ENCODE measurements at regions of chr22 and their contacts with region 1.

Region 1: GRCh38 chr22:43587565-43587964 is 175.8 kb downstream of the MPPED1 start:
- DNase-seq: peak; percentile 28
- ATAC-seq: no peak
- H3K4me3 ChIP-seq: no peak overlapping the region
- H3K27ac ChIP-seq: no peak overlapping the region
- H3K4me1 ChIP-seq: no peaks in the 10 kb centered on the region
- H3K27me3 ChIP-seq: no peaks in the 10 kb centered on the region
- CTCF ChIP-seq: no peak

Region 2: GRCh38 chr22:43515902-43516301 is 71.7 kb before region 1 on chr22:
- CTCF ChIA-PET with region 1: no interaction called
- POLR2A ChIA-PET with region 1: no interaction called
- intact Hi-C with region 1: no loop called
- DNase-seq: no peak
- ATAC-seq: no peak
- H3K4me3 ChIP-seq: no peak overlapping the region
- H3K27ac ChIP-seq: no peak overlapping the region
- H3K4me1 ChIP-seq: peaks cover 6% of the 10 kb centered on the region
- H3K27me3 ChIP-seq: no peaks in the 10 kb centered on the region
- CTCF ChIP-seq: no peak

Region 3: GRCh38 chr22:43726322-43726721 is 138.8 kb after region 1 on chr22:
- CTCF ChIA-PET with region 1: interaction called, 17 read pairs
- POLR2A ChIA-PET with region 1: no interaction called
- intact Hi-C with region 1: no loop called
- DNase-seq: no peak
- ATAC-seq: no peak
- H3K4me3 ChIP-seq: no peak overlapping the region
- H3K27ac ChIP-seq: no peak overlapping the region
- H3K4me1 ChIP-seq: no peaks in the 10 kb centered on the region
- H3K27me3 ChIP-seq: no peaks in the 10 kb centered on the region
- CTCF ChIP-seq: no peak

Region 4: DNA sequence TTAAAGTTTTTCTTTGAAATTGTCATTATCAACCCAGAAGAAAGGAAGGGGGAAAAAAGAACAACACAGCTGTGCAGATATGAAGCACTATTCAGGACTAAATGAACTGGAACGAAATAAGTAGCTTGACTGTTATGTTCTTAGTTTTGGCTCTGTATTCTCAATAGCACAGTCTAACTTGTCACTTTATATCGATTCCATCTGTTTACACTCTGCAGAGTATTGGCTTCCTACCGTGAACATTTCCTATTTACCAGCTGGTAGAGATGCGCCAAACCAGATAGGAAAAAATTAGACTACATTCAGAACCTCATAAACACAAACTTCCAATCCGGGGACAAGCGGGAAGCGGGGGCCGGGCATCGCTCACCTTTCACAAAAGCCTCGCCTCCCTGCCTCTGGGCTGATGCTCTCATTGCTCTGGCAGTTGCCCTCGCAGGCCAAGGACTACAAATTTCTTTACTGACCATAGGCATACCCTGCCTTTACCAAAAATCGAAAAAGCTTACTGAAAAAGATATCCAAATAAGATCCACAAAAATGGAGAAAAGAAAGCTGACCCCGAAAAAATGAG is 158.3 kb after region 1 on chr22:
- CTCF ChIA-PET with region 1: no interaction called
- POLR2A ChIA-PET with region 1: interaction called, 19 read pairs
- intact Hi-C with region 1: no loop called
- DNase-seq: no peak
- ATAC-seq: no peak
- H3K4me3 ChIP-seq: no peak overlapping the region
- H3K27ac ChIP-seq: no peak overlapping the region
- H3K4me1 ChIP-seq: no peaks in the 10 kb centered on the region
- H3K27me3 ChIP-seq: peaks cover 20% of the 10 kb centered on the region
- CTCF ChIP-seq: no peak